CD14-positive monocyte (primary cell): ENCODE measurements at regions of chr10 and their contacts with region 1.

Region 1: GRCh38 chr10:69045441-69046300 is 42.2 kb upstream of the SRGN start:
- DNase-seq: peak; percentile 94 to 99 (median 97)
- H3K4me3 ChIP-seq: peak overlapping the region in 2 of 3 experiments; percentile 12 to 58
- H3K4me3 Mint-ChIP-seq: peak overlapping the region; percentile 80 to 81
- H3K27ac ChIP-seq: peak overlapping the region; percentile 98 to 100
- H3K27ac Mint-ChIP-seq: peak overlapping the region; percentile 99 to 100 (median 100)
- H3K4me1 ChIP-seq: peaks cover 73 to 78% of the 10 kb centered on the region in 2 donors
- H3K4me1 Mint-ChIP-seq: peaks cover 77% of the 10 kb centered on the region
- H3K27me3 ChIP-seq: no peaks in the 10 kb centered on the region
- H3K27me3 Mint-ChIP-seq: peaks cover 0 to 4% (median 0%) of the 10 kb centered on the region in 3 donors
- CTCF ChIP-seq: no peak

Region 2: GRCh38 chr10:69014171-69014570 is 31.5 kb before region 1 on chr10:
- intact Hi-C with region 1: loop called in 1 of 2 experiments (anchors 5 kb)
- DNase-seq: peak; percentile 30 to 40 (median 36)
- H3K4me3 ChIP-seq: no peak overlapping the region
- H3K4me3 Mint-ChIP-seq: no peak overlapping the region
- H3K27ac ChIP-seq: peak overlapping the region in 1 of 2 donors; percentile 70
- H3K27ac Mint-ChIP-seq: peak overlapping the region; percentile 3 to 86 (median 57)
- H3K4me1 ChIP-seq: peaks cover 0 to 25% of the 10 kb centered on the region in 2 donors
- H3K4me1 Mint-ChIP-seq: peaks cover 24% of the 10 kb centered on the region
- H3K27me3 ChIP-seq: no peaks in the 10 kb centered on the region
- H3K27me3 Mint-ChIP-seq: no peaks in the 10 kb centered on the region
- CTCF ChIP-seq: no peak

Region 3: DNA sequence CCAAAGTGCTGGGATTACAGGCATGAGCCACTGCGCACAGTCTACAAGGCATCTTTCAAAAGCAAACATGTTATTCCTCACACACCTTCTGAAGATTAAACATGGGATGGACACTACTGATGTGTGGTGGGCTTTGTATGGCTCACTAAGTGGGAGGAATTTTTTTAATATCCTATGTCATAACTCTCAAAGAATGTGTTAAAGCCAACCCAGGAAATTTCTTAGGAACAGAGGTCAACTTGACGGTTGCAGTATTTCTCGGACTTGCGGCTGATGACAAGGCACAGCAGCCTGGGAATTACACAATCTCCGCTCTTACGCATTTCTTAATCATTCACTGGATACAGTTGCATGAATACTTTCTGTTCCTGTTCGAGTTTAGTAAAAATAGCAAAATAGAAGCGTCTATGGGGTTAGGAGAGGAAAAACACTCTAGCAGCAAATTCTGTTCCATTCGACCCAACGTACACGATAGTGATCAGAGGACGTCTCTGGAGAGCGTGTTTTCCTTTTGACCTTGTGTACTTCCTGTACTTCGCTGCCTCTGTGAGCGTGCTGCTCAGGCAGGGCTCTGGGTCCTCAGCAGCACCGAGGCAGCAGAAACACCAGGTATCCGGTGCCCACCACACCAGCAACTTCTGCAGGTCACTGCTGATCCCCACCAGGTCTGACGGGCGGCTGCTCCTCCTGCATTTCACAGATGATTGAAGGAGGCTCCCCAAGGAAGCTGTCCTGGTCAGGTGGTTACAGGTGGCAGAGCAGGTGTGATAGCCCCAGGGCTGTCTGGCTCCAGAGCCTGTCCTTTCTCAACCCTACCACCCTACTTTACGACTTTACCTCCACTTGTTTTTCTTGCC is 15.9 kb after region 1 on chr10:
- intact Hi-C with region 1: loop called (anchors 2 kb)
- DNase-seq: peak; percentile 96 to 99 (median 99)
- H3K4me3 ChIP-seq: peak overlapping the region; percentile 23 to 62 (median 28)
- H3K4me3 Mint-ChIP-seq: peak overlapping the region; percentile 64 to 77
- H3K27ac ChIP-seq: peak overlapping the region; percentile 99 to 100
- H3K27ac Mint-ChIP-seq: peak overlapping the region; percentile 98 to 100 (median 99)
- H3K4me1 ChIP-seq: peaks cover 96 to 98% of the 10 kb centered on the region in 2 donors
- H3K4me1 Mint-ChIP-seq: peaks cover 83% of the 10 kb centered on the region
- H3K27me3 ChIP-seq: no peaks in the 10 kb centered on the region
- H3K27me3 Mint-ChIP-seq: peaks cover 0 to 2% (median 0%) of the 10 kb centered on the region in 3 donors
- CTCF ChIP-seq: no peak

Region 4: GRCh38 chr10:69087590-69088470 is 42.2 kb after region 1 on chr10 and contains the start of gene SRGN:
- intact Hi-C with region 1: loop called (anchors 1 to 2 kb)
- DNase-seq: peak; percentile 95 to 99 (median 96)
- H3K4me3 ChIP-seq: peak within 1 kb of the TSS; percentile 73 to 99 (median 97)
- H3K4me3 Mint-ChIP-seq: peak within 1 kb of the TSS; percentile 90 to 99
- H3K27ac ChIP-seq: peak within 1 kb of the TSS; percentile 91 to 100
- H3K27ac Mint-ChIP-seq: peak within 1 kb of the TSS; percentile 97 to 100 (median 99)
- H3K4me1 ChIP-seq: peaks cover 60 to 64% of the 10 kb centered on the region in 2 donors
- H3K4me1 Mint-ChIP-seq: peaks cover 47% of the 10 kb centered on the region
- H3K27me3 ChIP-seq: no peaks in the 10 kb centered on the region
- H3K27me3 Mint-ChIP-seq: peaks cover 0 to 2% (median 0%) of the 10 kb centered on the region in 3 donors
- CTCF ChIP-seq: no peak
- polyA plus RNA-seq, gene SRGN: 1,724 to 3,407 (median 1,859) TPM

Region 5: DNA sequence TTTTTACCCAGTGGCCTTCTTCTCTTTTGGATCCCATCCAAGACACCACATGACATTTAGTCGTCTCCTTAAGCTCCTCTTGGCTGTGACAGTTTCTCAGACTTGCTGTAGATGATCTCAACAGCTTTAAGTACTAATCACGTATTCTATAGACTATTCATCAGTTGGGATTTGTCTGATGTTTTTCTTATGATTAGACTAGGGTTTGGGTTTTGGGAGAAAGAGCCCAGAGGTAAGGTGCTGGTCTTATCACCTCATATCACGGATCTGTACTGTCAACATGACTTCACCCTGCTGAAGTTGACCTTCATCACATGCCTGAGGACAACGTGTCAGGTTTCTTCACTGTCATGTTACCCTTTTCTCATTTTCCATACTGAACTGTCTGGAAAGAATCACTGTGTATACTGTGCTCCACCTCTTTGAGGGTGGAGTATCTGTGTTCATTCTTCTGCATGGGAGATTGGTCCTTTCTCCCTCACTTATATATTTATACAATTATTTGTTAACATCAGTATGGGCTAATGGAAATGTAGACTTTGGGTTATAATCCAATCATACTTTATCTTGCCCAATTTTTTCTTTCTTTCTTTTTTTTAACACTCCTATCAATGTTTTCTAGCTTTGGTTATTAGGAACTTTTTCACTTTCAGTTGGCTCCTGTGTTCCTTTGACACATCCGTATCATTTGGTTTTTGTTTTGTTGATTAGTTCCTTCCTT is 168.1 kb after region 1 on chr10:
- intact Hi-C with region 1: no loop called
- DNase-seq: peak in 1 of 3 donors; percentile 6
- H3K4me3 ChIP-seq: no peak overlapping the region
- H3K4me3 Mint-ChIP-seq: no peak overlapping the region
- H3K27ac ChIP-seq: no peak overlapping the region
- H3K27ac Mint-ChIP-seq: no peak overlapping the region
- H3K4me1 ChIP-seq: peaks cover 13 to 14% of the 10 kb centered on the region in 2 donors
- H3K4me1 Mint-ChIP-seq: peaks cover 19% of the 10 kb centered on the region
- H3K27me3 ChIP-seq: no peaks in the 10 kb centered on the region
- H3K27me3 Mint-ChIP-seq: peaks cover 0 to 8% (median 8%) of the 10 kb centered on the region in 3 donors
- CTCF ChIP-seq: no peak